CD8-positive, alpha-beta T cell (primary cell): ENCODE measurements at regions of chr9 and their contacts with region 1.

Region 1: GRCh38 chr9:128881901-128882681 is at the starts of genes KYAT1 and LRRC8A:
- DNase-seq: peak; percentile 96 to 99 (median 98)
- ATAC-seq: peak; percentile 91
- H3K4me3 ChIP-seq: peak within 1 kb of the TSS; percentile 80 to 86
- H3K4me3 Mint-ChIP-seq: peak within 1 kb of the TSS; percentile 97
- H3K27ac ChIP-seq: peak within 1 kb of the TSS; percentile 76 to 91
- H3K27ac Mint-ChIP-seq: peak within 1 kb of the TSS; percentile 98
- H3K4me1 ChIP-seq: peaks cover 31% of the 10 kb centered on the region
- H3K4me1 Mint-ChIP-seq: peaks cover 51% of the 10 kb centered on the region
- H3K27me3 ChIP-seq: no peaks in the 10 kb centered on the region
- H3K27me3 Mint-ChIP-seq: no peaks in the 10 kb centered on the region
- CTCF ChIP-seq: no peak
- total RNA-seq, gene KYAT1: 2.4 to 3.0 TPM
- total RNA-seq, gene LRRC8A: 35.0 to 40.1 TPM

Region 2: DNA sequence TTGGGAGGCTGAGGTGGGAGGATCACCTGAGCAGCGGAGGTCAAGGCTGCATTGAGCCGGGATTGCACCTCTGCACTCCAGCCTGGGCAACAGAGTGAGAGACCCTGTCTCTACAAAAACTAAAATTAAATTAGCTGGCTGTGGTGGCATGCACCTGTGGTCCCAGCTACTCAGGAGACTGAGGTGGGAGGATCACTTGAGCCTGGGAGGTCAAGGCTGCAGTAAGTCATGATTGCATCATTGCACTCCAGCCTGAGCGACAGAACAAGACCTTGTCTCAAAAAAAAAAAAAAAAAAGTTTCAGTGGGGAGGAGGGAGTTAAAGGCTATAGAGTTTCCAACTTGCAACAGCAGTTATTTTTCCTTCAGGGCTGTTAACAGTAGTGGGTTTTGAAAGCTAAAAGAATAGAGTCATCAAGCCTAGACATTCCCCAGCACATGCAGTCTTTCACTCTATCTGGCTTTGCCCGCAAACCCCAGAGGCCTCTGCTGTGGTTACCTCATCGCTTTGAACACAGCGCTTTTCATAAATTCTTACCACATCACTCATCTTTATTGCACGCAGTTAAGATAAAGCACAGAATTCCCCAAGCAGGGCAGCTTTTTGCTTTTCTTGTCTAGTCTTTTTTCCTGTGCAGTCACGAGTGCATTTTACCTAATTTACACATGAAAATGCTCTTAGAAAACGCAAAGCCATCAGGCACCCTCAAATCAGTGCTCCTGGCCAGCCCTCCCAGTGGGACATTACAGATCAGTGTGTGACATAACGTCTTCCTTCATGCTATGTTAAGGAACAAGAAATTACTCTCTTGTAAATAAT is 1493.8 kb before region 1 on chr9:
- CTCF ChIA-PET with region 1: no interaction called
- POLR2A ChIA-PET with region 1: no interaction called
- intact Hi-C with region 1: no loop called
- DNase-seq: peak; percentile 73 to 96 (median 84)
- ATAC-seq: peak; percentile 97
- H3K4me3 ChIP-seq: no peak overlapping the region
- H3K4me3 Mint-ChIP-seq: peak overlapping the region; percentile 4
- H3K27ac ChIP-seq: no peak overlapping the region
- H3K27ac Mint-ChIP-seq: peak overlapping the region; percentile 7
- H3K4me1 ChIP-seq: peaks cover 18% of the 10 kb centered on the region
- H3K4me1 Mint-ChIP-seq: peaks cover 26% of the 10 kb centered on the region
- H3K27me3 ChIP-seq: peaks cover 28 to 61% of the 10 kb centered on the region in 2 experiments
- H3K27me3 Mint-ChIP-seq: peaks cover 66% of the 10 kb centered on the region
- CTCF ChIP-seq: no peak

Region 3: GRCh38 chr9:127930231-127931091 is 951.6 kb before region 1 on chr9 and contains the start of gene PIP5KL1:
- CTCF ChIA-PET with region 1: no interaction called
- POLR2A ChIA-PET with region 1: no interaction called
- intact Hi-C with region 1: no loop called
- DNase-seq: peak; percentile 45 to 83 (median 68)
- ATAC-seq: peak; percentile 60
- H3K4me3 ChIP-seq: peak within 1 kb of the TSS; percentile 40 to 53
- H3K4me3 Mint-ChIP-seq: peak within 1 kb of the TSS; percentile 69
- H3K27ac ChIP-seq: no peak within 1 kb of the TSS
- H3K27ac Mint-ChIP-seq: peak within 1 kb of the TSS; percentile 71
- H3K4me1 ChIP-seq: peaks cover 36% of the 10 kb centered on the region
- H3K4me1 Mint-ChIP-seq: peaks cover 35% of the 10 kb centered on the region
- H3K27me3 ChIP-seq: peaks cover 0 to 5% of the 10 kb centered on the region in 2 experiments
- H3K27me3 Mint-ChIP-seq: no peaks in the 10 kb centered on the region
- CTCF ChIP-seq: no peak
- total RNA-seq, gene PIP5KL1: 5.1 to 7.4 TPM

Region 4: DNA sequence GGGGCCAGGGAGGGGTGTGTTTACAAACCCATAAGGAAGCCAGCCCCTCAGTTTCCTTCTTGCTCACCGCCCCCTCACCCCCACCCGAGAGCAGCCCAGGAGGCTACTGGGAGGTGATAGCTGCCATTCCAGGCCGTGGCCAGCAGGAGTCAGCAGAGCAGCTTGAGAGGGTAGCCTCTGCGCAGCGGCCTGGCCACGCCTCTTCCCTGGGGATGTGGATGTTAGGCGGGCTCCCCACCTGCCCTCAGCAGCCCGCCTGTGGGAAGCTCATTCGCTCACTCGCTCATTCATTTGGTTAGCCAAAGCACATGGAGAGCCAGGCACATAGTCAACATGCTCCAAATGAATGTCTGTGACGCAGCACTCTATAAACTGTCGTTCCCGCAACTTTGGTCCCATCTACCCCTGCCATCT is 938.4 kb before region 1 on chr9:
- CTCF ChIA-PET with region 1: no interaction called
- POLR2A ChIA-PET with region 1: no interaction called
- intact Hi-C with region 1: no loop called
- DNase-seq: peak; percentile 49 to 87 (median 78)
- ATAC-seq: peak; percentile 85
- H3K4me3 ChIP-seq: no peak overlapping the region
- H3K4me3 Mint-ChIP-seq: no peak overlapping the region
- H3K27ac ChIP-seq: no peak overlapping the region
- H3K27ac Mint-ChIP-seq: peak overlapping the region; percentile 89
- H3K4me1 ChIP-seq: peaks cover 39% of the 10 kb centered on the region
- H3K4me1 Mint-ChIP-seq: peaks cover 35% of the 10 kb centered on the region
- H3K27me3 ChIP-seq: no peaks in the 10 kb centered on the region
- H3K27me3 Mint-ChIP-seq: no peaks in the 10 kb centered on the region
- CTCF ChIP-seq: peak; percentile 83

Region 5: DNA sequence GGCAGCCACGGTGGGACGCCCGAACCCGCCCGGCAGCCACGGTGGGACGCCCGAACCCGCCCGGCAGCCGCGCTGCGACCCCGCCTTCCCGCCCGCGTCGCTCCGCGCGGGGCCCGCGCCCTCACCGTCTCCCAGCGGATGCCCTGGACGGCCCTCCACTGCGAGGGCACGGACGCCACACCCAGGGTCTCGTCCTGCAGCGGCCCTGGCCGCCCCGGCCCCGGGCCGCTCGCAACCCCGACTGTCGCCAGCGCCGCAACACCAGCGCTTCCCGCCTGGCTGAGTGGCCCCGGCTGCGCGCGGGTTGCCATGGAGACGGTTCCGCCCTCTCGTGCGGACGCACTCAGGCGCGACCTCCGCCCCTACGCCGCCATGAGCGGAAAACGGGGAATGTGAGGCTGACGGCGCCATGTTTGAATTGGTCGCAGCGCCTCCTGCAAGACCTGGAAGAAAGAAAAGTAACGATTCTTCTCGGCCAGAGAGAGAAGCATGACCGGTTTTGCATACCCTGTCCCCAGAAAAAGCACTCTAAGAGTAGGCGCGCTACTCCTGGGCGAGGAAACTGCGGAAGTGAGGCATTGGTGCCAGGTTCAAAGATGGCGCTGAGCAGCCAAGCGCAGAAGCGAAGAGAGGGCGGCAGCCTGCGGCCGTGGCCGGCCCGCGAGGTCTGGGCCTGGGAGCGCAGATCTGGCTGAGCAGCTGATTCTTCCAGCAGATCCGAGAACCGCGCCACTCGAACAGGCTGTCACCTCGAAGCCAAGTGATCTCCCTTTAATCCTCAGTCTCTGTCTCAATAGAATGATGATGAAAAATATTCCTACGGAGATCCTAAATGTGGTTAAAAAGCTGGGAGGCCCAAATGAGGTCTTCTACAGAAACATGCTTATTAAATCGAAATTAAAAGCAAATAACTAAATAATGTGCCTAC is 225.4 kb before region 1 on chr9 and contains the start of gene DYNC2I2:
- CTCF ChIA-PET with region 1: no interaction called
- POLR2A ChIA-PET with region 1: no interaction called
- intact Hi-C with region 1: loop called in 1 of 2 experiments (anchors 1 kb)
- DNase-seq: peak; percentile 92 to 98 (median 97)
- ATAC-seq: peak; percentile 96
- H3K4me3 ChIP-seq: peak within 1 kb of the TSS; percentile 72 to 76
- H3K4me3 Mint-ChIP-seq: peak within 1 kb of the TSS; percentile 95
- H3K27ac ChIP-seq: peak within 1 kb of the TSS; percentile 88 to 97
- H3K27ac Mint-ChIP-seq: peak within 1 kb of the TSS; percentile 99
- H3K4me1 ChIP-seq: peaks cover 5% of the 10 kb centered on the region
- H3K4me1 Mint-ChIP-seq: peaks cover 7% of the 10 kb centered on the region
- H3K27me3 ChIP-seq: no peaks in the 10 kb centered on the region
- H3K27me3 Mint-ChIP-seq: no peaks in the 10 kb centered on the region
- CTCF ChIP-seq: no peak
- total RNA-seq, gene DYNC2I2: 3.7 to 3.9 TPM

Region 6: GRCh38 chr9:128771745-128772519 is 110.2 kb before region 1 on chr9 and contains the start of gene ZER1:
- CTCF ChIA-PET with region 1: no interaction called
- POLR2A ChIA-PET with region 1: no interaction called
- intact Hi-C with region 1: loop called (anchors 1 kb)
- DNase-seq: peak; percentile 86 to 98 (median 95)
- ATAC-seq: peak; percentile 85
- H3K4me3 ChIP-seq: peak within 1 kb of the TSS; percentile 82 to 98
- H3K4me3 Mint-ChIP-seq: peak within 1 kb of the TSS; percentile 96
- H3K27ac ChIP-seq: peak within 1 kb of the TSS; percentile 80 to 98
- H3K27ac Mint-ChIP-seq: peak within 1 kb of the TSS; percentile 99
- H3K4me1 ChIP-seq: peaks cover 22% of the 10 kb centered on the region
- H3K4me1 Mint-ChIP-seq: peaks cover 33% of the 10 kb centered on the region
- H3K27me3 ChIP-seq: no peaks in the 10 kb centered on the region
- H3K27me3 Mint-ChIP-seq: no peaks in the 10 kb centered on the region
- CTCF ChIP-seq: no peak
- total RNA-seq, gene ZER1: 35.9 to 45.2 TPM

Region 7: GRCh38 chr9:128829477-128830251 is 52.4 kb before region 1 on chr9 and contains the start of gene SPOUT1:
- CTCF ChIA-PET with region 1: no interaction called
- POLR2A ChIA-PET with region 1: no interaction called
- intact Hi-C with region 1: loop called in 1 of 2 experiments (anchors 1 kb)
- DNase-seq: peak; percentile 88 to 96 (median 92)
- ATAC-seq: peak; percentile 99
- H3K4me3 ChIP-seq: peak within 1 kb of the TSS; percentile 89 to 99
- H3K4me3 Mint-ChIP-seq: peak within 1 kb of the TSS; percentile 96
- H3K27ac ChIP-seq: peak within 1 kb of the TSS; percentile 73 to 83
- H3K27ac Mint-ChIP-seq: peak within 1 kb of the TSS; percentile 94
- H3K4me1 ChIP-seq: peaks cover 18% of the 10 kb centered on the region
- H3K4me1 Mint-ChIP-seq: peaks cover 20% of the 10 kb centered on the region
- H3K27me3 ChIP-seq: no peaks in the 10 kb centered on the region
- H3K27me3 Mint-ChIP-seq: no peaks in the 10 kb centered on the region
- CTCF ChIP-seq: no peak
- total RNA-seq, gene SPOUT1: 25.0 to 25.2 TPM

Region 8: DNA sequence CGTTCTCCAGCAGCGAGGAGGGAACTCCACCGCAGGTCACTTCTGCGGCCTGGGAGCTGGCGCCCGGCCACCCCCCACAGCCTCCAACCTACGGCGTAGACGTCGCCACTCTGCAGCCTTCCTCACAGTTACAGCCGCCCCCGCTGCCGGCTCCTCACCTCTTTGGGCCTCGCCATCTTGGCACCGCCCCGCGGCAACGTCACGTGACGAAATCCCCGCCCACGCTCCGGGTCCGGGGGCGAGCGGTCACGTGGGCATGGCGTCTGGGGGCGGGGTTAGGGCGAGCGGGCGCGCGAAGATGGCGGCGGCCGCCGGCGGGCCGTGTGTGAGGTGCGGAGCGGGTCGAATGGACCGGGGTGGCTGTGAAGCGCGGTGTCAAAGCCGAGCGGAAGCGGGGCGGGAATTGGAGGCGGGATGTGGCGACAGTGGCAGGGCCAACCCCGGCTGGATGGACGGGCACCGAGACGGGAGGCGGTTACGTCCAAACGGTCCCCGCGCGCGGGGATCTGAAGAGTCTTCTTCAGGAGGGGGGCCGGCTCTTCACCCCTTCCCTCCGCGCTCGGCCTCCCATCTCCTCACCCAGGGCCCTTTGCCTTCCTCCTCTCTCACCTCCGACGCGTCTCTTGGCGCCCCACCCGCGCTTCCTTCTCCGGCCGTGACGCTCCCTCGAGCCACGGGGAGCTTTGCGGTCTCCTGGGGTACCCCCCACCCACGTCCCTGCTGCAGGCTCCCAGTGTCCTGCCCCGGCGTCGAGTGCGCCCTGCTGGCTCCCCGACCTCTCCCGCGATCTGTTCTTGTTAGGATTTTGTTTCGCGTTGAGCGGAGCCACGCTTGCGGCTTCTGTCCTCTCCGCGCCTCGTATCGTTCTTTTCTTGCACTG is 65.6 kb after region 1 on chr9 and contains the starts of genes DOLK and NUP188:
- CTCF ChIA-PET with region 1: no interaction called
- POLR2A ChIA-PET with region 1: no interaction called
- intact Hi-C with region 1: loop called (anchors 1 kb)
- DNase-seq: peak; percentile 97 to 100 (median 99)
- ATAC-seq: peak; percentile 87
- H3K4me3 ChIP-seq: peak within 1 kb of the TSS; percentile 93 to 99
- H3K4me3 Mint-ChIP-seq: peak within 1 kb of the TSS; percentile 99
- H3K27ac ChIP-seq: peak within 1 kb of the TSS; percentile 85 to 99
- H3K27ac Mint-ChIP-seq: peak within 1 kb of the TSS; percentile 97
- H3K4me1 ChIP-seq: peaks cover 20% of the 10 kb centered on the region
- H3K4me1 Mint-ChIP-seq: peaks cover 31% of the 10 kb centered on the region
- H3K27me3 ChIP-seq: no peaks in the 10 kb centered on the region
- H3K27me3 Mint-ChIP-seq: no peaks in the 10 kb centered on the region
- CTCF ChIP-seq: no peak
- total RNA-seq, gene DOLK: 10.4 to 10.7 TPM
- total RNA-seq, gene NUP188: 48.7 to 49.0 TPM

Region 9: DNA sequence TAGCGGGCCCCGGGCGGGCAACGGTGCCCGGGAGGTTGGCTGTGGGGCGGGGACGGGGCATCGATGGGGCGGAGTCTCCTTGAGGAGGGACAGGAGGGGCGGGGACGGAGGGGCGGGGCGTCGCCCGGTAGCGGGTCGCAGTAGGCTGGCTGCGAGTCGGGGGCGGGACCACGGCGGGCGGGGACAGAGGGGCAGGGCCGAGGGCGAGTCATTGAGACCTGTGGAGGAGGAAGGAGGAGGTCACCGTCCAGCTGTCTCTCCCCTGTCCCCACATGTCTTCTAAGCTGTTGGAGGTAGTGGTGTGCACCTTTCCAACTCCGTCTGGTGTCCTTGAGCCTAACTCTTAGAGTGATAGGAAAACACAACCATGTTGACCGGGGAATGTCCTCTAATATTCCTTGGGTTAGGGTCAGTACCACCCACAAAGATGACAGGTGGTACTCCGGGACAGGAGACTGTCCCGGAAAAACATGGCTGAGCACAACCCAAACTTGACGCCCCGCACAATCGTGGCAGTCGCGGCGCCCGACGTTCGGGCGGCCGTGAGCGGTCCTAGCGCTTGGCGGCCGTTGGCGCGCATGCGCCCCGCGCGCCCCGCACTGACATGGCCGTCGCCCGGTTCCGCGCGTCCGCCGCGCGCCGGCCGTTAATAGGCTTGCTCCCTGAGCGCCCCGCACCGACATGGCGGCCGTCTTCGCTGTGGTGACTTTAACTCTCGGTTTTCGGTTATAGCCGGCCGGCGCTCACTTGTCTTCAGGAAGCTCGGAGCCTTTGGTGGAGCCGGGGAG is 228.8 kb after region 1 on chr9 and contains the starts of genes CRAT and PTPA:
- CTCF ChIA-PET with region 1: no interaction called
- POLR2A ChIA-PET with region 1: no interaction called
- intact Hi-C with region 1: loop called in 1 of 2 experiments (anchors 5 kb)
- DNase-seq: peak; percentile 91 to 97 (median 96)
- ATAC-seq: peak; percentile 88
- H3K4me3 ChIP-seq: peak within 1 kb of the TSS; percentile 69 to 85
- H3K4me3 Mint-ChIP-seq: peak within 1 kb of the TSS; percentile 93
- H3K27ac ChIP-seq: peak within 1 kb of the TSS; percentile 79 to 81
- H3K27ac Mint-ChIP-seq: peak within 1 kb of the TSS; percentile 91
- H3K4me1 ChIP-seq: peaks cover 21% of the 10 kb centered on the region
- H3K4me1 Mint-ChIP-seq: peaks cover 39% of the 10 kb centered on the region
- H3K27me3 ChIP-seq: no peaks in the 10 kb centered on the region
- H3K27me3 Mint-ChIP-seq: no peaks in the 10 kb centered on the region
- CTCF ChIP-seq: no peak
- total RNA-seq, gene CRAT: 5.6 to 6.3 TPM
- total RNA-seq, gene PTPA: 24.7 to 26.8 TPM

Region 10: DNA sequence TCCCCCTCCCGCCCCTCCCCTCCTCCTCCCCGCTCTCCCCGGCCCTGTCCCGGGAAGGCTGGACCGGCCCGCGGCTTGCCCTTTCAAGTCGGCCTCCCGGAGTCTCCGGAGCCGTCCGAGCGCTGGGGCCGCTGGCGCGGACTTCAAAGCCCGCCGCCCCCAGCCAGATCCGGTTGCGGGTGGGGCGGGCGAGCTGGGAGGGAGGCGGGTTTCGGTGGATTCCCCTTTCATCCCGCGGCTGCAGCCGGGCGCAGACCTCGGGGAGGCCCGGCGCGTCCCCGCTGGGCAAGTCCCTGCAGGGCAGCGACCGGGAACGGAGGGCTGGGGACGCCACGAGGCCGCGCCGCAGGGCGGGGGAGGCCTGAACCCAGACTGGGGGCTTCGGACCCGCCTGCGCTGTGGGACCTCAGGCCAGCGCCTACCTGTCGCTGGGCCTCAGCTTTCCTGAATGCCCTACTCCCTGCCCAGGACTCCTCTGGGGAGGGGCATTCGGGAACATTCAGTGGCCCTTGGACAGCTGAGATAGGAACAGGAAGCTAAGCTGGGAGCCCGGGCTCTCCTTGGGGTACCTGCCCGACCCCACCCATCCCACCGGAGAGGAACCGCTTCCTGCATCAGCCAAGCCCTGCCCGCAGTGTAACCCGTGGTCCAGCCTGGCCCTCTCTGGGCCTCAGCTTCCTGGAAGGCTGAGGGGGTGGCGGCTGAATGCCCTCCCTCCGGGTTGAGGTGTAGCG is 715.4 kb after region 1 on chr9:
- CTCF ChIA-PET with region 1: no interaction called
- POLR2A ChIA-PET with region 1: no interaction called
- intact Hi-C with region 1: no loop called
- DNase-seq: peak in 6 of 9 experiments; percentile 19 to 72 (median 48)
- ATAC-seq: peak; percentile 60
- H3K4me3 ChIP-seq: peak overlapping the region; percentile 32 to 35
- H3K4me3 Mint-ChIP-seq: peak overlapping the region; percentile 73
- H3K27ac ChIP-seq: no peak overlapping the region
- H3K27ac Mint-ChIP-seq: no peak overlapping the region
- H3K4me1 ChIP-seq: peaks cover 14% of the 10 kb centered on the region
- H3K4me1 Mint-ChIP-seq: peaks cover 16% of the 10 kb centered on the region
- H3K27me3 ChIP-seq: no peaks in the 10 kb centered on the region
- H3K27me3 Mint-ChIP-seq: no peaks in the 10 kb centered on the region
- CTCF ChIP-seq: no peak